BJ (cell line): ENCODE measurements at regions of chr16 and their contacts with region 1.

Region 1: GRCh38 chr16:1313721-1314369 is 4.4 kb downstream of the UBE2I start:
- DNase-seq: no peak
- H3K4me3 ChIP-seq: no peak overlapping the region
- H3K27me3 ChIP-seq: no peaks in the 10 kb centered on the region
- CTCF ChIP-seq: no peak

Region 2: GRCh38 chr16:2474877-2475412 is 1161.1 kb after region 1 on chr16 and contains the start of gene TBC1D24:
- CTCF ChIA-PET with region 1: no interaction called
- POLR2A ChIA-PET with region 1: interaction called, 16 read pairs
- DNase-seq: no peak
- H3K4me3 ChIP-seq: peak within 1 kb of the TSS; percentile 82
- H3K27me3 ChIP-seq: no peaks in the 10 kb centered on the region
- CTCF ChIP-seq: no peak
- polyA plus RNA-seq, gene TBC1D24: 6.0 and 9.2 TPM in 2 replicates